ENCODE measurements at regions of chr9 and their contacts with region 1.

Region 1: DNA sequence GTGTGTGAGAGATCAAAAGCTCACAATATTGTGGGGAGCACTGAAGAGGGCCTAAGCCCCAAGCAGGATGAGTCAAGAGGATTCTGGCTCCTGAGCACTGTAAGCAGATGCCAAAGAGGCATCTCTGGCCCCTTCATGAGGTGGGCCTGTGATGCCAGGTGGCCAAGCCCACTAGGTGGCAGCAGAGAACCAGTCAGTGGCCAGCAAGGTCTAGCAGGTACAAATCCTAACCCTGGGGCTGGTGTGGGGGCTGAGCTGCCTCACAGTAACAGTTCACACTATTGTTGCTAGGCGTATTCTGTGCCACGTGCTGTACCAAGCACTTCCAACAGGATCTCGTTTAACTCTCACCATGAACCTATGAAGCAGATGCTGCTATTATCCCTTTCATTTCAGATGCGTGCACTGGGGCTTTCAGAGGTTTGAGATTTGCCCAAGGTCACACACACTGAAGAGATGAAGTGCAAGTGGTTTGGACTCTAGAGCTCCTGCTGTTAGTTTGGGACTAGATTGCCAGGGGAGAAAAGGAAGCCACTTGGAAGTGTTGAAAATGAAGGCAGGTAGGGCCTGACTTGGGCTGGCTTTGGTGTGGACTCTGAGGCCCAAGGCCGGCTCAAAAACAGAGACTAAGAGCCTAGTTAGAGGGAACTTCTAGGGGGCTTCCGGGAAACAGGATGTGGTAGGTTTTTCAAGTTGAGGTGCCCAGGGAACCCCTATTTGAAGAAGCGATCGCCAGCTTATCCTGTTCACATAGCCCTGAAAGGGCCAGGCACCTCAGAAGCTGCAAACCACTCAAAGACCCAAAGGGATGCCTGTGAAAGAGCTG is 4.4 kb upstream of the MLANA start:
- DNase-seq: peak; percentile 40
- ATAC-seq: peak; percentile 100
- H3K4me3 ChIP-seq: no peak overlapping the region
- H3K27ac ChIP-seq: no peak overlapping the region
- H3K4me1 ChIP-seq: no peaks in the 10 kb centered on the region
- H3K27me3 ChIP-seq: no peaks in the 10 kb centered on the region
- CTCF ChIP-seq: peak; percentile 95 to 96 (median 95); a peak in 5 of 6 replicates
- EP300 ChIP-seq: no peak
- POLR2A ChIP-seq: no peak
- RAD21 ChIP-seq: peak; percentile 98

Region 2: DNA sequence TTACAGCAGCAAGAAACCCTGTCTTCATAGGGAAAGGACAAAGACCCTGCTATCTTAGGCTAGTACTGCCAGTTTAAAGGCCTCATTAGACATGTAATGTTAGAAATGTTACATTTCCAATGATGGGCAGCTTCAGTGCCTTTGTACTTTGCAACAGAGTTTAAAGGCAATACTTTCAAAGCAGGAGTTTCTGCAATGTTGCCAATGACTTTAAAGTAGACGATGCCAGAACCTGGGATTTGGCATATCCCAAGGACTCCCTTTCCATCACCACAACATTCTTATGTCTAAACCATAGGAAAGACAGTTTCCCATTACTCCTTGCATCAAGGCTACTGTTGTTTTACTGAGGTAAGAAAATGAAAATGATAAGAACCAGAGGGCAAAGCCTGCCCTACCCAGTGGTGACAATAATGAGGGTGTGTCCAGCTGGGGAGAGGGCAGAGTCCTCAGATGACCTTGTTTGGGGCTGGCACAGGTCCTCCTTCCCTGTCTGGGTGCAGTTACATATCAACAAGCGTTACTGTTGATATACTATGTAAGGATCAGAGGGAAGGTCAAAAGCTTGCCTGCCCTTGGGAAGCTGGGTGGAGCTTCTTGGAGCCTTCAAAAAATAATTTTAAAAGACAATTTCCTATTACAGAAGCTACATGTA is 23.1 kb before region 1 on chr9:
- CTCF ChIA-PET with region 1: interaction called, 14 read pairs
- POLR2A ChIA-PET with region 1: interaction called, 4 read pairs
- RAD21 ChIA-PET with region 1: interaction called, 3 read pairs
- SMC1A ChIA-PET with region 1: interaction called, 4 read pairs
- in situ Hi-C with region 1: no loop called
- intact Hi-C with region 1: no loop called
- DNase-seq: no peak
- ATAC-seq: no peak
- H3K4me3 ChIP-seq: no peak overlapping the region
- H3K27ac ChIP-seq: no peak overlapping the region
- H3K4me1 ChIP-seq: no peaks in the 10 kb centered on the region
- H3K27me3 ChIP-seq: no peaks in the 10 kb centered on the region
- CTCF ChIP-seq: no peak
- EP300 ChIP-seq: no peak
- POLR2A ChIP-seq: no peak
- RAD21 ChIP-seq: no peak

Region 3: DNA sequence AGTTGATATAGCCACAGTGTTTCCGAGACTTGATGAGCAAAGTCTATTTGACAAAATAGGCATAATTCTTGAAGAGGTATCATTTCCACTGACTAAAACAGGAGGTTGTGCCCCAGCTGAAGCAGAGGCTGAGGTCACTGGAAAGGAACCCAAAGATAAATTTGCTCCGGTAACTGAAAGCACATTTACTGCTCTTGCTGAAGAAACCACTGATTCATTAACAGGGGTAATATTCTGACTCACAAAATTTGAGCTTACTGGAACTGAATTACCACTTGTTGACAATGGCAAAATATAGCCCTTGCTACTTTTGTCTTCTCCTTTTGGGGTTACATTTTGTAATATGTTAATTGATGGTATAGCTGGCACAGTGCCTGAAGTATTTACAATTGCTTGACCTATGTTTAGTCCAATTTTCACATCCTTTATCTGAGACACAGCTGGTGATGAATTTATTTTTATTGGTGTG is 34.6 kb after region 1 on chr9:
- CTCF ChIA-PET with region 1: interaction called, 61 read pairs
- POLR2A ChIA-PET with region 1: interaction called, 3 read pairs
- RAD21 ChIA-PET with region 1: interaction called, 53 read pairs
- SMC1A ChIA-PET with region 1: interaction called, 66 read pairs
- in situ Hi-C with region 1: no loop called
- intact Hi-C with region 1: no loop called
- DNase-seq: peak; percentile 66
- ATAC-seq: peak; percentile 91
- H3K4me3 ChIP-seq: no peak overlapping the region
- H3K27ac ChIP-seq: no peak overlapping the region
- H3K4me1 ChIP-seq: no peaks in the 10 kb centered on the region; the same call in 1 of the 2 replicates
- H3K27me3 ChIP-seq: no peaks in the 10 kb centered on the region
- CTCF ChIP-seq: no peak
- EP300 ChIP-seq: peak; percentile 87 to 94; a peak in 3 of 4 replicates
- POLR2A ChIP-seq: no peak
- RAD21 ChIP-seq: no peak

Region 4: GRCh38 chr9:5982317-5982716 is 96.0 kb after region 1 on chr9:
- CTCF ChIA-PET with region 1: interaction called, 117 read pairs
- POLR2A ChIA-PET with region 1: no interaction called
- RAD21 ChIA-PET with region 1: interaction called, 79 read pairs
- SMC1A ChIA-PET with region 1: interaction called, 119 read pairs
- in situ Hi-C with region 1: no loop called
- intact Hi-C with region 1: no loop called
- DNase-seq: no peak
- ATAC-seq: no peak
- H3K4me3 ChIP-seq: no peak overlapping the region
- H3K27ac ChIP-seq: no peak overlapping the region
- H3K4me1 ChIP-seq: no peaks in the 10 kb centered on the region
- H3K27me3 ChIP-seq: no peaks in the 10 kb centered on the region
- CTCF ChIP-seq: no peak
- EP300 ChIP-seq: no peak
- POLR2A ChIP-seq: no peak
- RAD21 ChIP-seq: no peak

Region 5: DNA sequence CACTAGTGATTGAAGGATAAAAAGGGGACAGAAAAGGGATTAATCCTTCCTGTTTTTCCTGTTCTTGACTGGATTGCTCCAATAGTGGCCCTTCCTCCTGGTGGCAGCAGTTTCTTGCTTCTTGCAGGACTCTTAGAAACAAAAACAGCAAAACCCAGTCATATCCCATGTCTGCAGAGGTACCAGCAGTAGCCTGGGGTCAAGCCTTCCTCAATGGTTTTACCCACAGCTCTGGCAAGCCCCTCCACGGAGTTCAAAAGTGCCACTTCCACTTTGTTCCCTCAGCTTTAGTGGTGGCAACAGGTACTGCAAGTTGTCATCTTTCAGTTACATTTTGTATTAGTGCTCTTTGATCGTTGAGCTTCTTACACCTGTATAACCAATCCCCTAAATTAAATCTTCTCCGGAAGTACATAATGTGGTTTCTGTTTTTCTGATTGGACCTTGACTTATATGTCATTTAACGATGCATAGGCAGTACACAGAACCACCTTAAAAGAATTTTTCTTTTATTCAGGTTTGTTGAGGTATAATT is 137.8 kb after region 1 on chr9:
- CTCF ChIA-PET with region 1: interaction called, 23 read pairs
- POLR2A ChIA-PET with region 1: no interaction called
- RAD21 ChIA-PET with region 1: interaction called, 4 read pairs
- SMC1A ChIA-PET with region 1: interaction called, 18 read pairs
- in situ Hi-C with region 1: no loop called
- intact Hi-C with region 1: no loop called
- DNase-seq: no peak
- ATAC-seq: peak; percentile 99
- H3K4me3 ChIP-seq: no peak overlapping the region
- H3K27ac ChIP-seq: no peak overlapping the region
- H3K4me1 ChIP-seq: no peaks in the 10 kb centered on the region
- H3K27me3 ChIP-seq: no peaks in the 10 kb centered on the region; a peak in 1 of 4 replicates
- CTCF ChIP-seq: peak; percentile 28 to 69 (median 61); a peak in 5 of 6 replicates
- EP300 ChIP-seq: no peak
- POLR2A ChIP-seq: no peak
- RAD21 ChIP-seq: no peak

Region 6: GRCh38 chr9:6305954-6306563 is 419.7 kb after region 1 on chr9:
- CTCF ChIA-PET with region 1: interaction called, 50 read pairs
- POLR2A ChIA-PET with region 1: interaction called, 3 read pairs
- RAD21 ChIA-PET with region 1: interaction called, 29 read pairs
- SMC1A ChIA-PET with region 1: interaction called, 28 read pairs
- in situ Hi-C with region 1: loop called (anchors 25 kb)
- intact Hi-C with region 1: loop called (anchors 1 kb)
- DNase-seq: peak; percentile 23
- ATAC-seq: peak; percentile 80
- H3K4me3 ChIP-seq: no peak overlapping the region
- H3K27ac ChIP-seq: no peak overlapping the region
- H3K4me1 ChIP-seq: peaks cover 3% of the 10 kb centered on the region; the same call in 1 of the 2 replicates
- H3K27me3 ChIP-seq: no peaks in the 10 kb centered on the region
- CTCF ChIP-seq: peak; percentile 43 to 69 (median 52); a peak in 5 of 6 replicates
- EP300 ChIP-seq: no peak
- POLR2A ChIP-seq: no peak
- RAD21 ChIP-seq: peak; percentile 92

Measured in GM12878 (cell line).